Posterior vena cava (tissue), 2 donors: ENCODE measurements at regions of chr17 and their contacts with region 1.

Region 1: GRCh38 chr17:49694847-49695683 is 12.7 kb downstream of the SLC35B1 start:
- DNase-seq: no peak

Region 2: GRCh38 chr17:47915776-47916398 is 1779.2 kb before region 1 on chr17:
- intact Hi-C with region 1: loop called in 1 of 2 experiments (anchors 10 kb)
- DNase-seq: no peak

Region 3: DNA sequence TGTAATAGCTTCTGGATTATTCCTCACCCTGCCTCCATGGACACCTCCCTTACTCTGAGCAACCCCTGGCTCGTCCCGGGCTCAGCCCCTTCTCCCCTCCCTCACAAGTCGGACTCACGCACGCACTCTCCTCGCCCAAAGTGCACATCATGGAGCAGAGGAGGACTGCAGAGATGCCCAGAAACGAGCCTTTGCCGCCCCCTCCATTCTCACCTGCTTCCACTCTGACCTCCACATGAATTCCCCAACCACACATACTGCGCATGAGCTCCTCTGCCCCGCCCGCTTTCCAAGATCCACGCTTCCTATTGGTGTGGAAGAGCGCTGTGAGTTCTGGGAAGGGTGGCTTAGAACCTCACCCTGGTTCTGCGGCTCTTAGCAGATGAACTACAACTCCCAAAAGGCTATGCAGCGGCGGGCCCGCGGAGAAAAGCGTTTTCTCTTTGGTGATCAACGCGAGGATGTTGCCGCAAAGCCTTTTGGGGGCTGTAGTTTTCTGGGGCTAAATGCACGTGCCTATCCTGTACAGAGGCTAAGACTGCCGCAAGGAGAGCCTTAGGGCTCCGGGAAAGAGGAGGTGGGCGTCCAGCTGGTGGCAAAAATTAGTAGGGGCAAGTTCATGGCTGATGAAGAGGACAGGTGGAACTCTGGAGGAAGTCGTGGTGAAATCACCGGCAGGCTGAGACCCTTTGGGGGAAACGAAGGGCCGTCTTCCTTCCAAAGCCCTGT is 280.3 kb before region 1 on chr17 and contains the start of gene PHB1:
- intact Hi-C with region 1: loop called in 1 of 2 experiments (anchors 5 kb)
- DNase-seq: peak; percentile 98
- total RNA-seq, gene PHB1: 102 to 111 TPM

Region 4: DNA sequence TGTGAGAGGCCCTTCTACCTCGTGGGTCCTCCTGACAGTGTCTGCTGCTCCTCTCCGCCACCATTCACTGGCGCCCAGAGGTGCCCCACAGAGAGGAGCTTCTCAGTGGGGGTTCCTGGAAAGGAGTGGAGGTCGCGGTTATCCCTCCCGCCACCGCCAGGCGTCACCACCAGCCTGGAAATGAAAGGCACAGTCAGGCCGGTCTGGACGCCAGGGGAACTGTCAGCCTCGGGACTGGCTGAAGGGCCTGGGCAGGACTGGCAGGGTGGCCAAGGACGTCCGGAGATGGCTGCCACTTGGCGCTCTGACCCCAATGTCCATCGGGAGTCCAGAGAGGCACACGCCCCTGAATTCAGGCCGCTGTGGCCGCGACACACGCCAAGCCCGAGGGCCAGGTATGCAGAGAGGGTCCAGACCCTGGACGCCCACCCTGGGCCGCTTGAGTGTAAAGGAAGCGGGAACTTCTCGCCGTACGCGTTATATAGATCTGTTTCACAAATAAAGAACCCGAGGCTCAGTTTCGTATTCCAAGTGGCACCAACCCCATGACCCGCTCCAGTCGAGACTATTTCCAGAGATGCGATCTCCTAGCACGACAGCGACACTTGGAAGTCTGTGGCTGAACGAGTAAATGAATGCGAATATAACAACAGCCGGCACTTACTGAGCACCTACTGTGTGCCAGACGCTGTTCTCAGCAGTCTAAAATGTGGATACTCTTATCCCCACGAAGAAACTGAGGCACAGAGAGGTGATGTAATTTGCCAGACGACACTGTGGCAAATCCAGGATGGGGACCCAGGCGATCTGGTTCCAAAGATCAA is 127.0 kb before region 1 on chr17:
- intact Hi-C with region 1: loop called (anchors 2 kb)
- DNase-seq: peak; percentile 97